Aorta (tissue), 5 donors: ENCODE measurements at regions of chr6 and their contacts with region 1.

Region 1: GRCh38 chr6:130385064-130385695 is 19.4 kb downstream of the TMEM200A start:
- DNase-seq: no peak
- ATAC-seq: no peak
- H3K4me3 ChIP-seq: no peak overlapping the region
- H3K27ac ChIP-seq: no peak overlapping the region
- H3K4me1 ChIP-seq: no peaks in the 10 kb centered on the region
- H3K27me3 ChIP-seq: no peaks in the 10 kb centered on the region

Region 2: DNA sequence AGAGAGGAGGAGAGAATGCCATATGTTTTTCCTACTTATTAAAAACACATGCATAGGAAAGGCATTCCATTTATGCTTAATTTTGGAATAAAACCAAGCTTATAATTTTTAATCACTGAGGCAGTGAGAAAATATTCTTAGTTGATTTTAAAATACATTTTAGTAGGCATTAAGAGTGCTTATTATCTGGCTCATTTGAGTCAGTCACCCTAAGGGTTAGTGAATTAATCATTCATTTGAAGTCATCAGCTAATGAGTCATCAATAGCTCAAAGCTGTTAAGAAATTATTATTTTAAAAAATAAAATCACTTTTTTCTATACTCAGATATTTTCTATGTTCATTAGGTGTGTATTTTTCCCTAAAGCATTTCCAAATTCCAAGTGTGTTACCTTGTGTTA is 62.2 kb after region 1 on chr6:
- intact Hi-C with region 1: loop called in 1 of 2 experiments (anchors 2 kb)
- DNase-seq: no peak
- ATAC-seq: no peak
- H3K4me3 ChIP-seq: no peak overlapping the region
- H3K27ac ChIP-seq: no peak overlapping the region
- H3K4me1 ChIP-seq: no peaks in the 10 kb centered on the region
- H3K27me3 ChIP-seq: no peaks in the 10 kb centered on the region

Region 3: GRCh38 chr6:130625825-130626527 is 240.8 kb after region 1 on chr6:
- intact Hi-C with region 1: no loop called
- DNase-seq: no peak
- ATAC-seq: no peak
- H3K4me3 ChIP-seq: no peak overlapping the region
- H3K27ac ChIP-seq: no peak overlapping the region
- H3K4me1 ChIP-seq: no peaks in the 10 kb centered on the region
- H3K27me3 ChIP-seq: no peaks in the 10 kb centered on the region